ENCODE measurements at regions of chr15 and their contacts with region 1.

Region 1: DNA sequence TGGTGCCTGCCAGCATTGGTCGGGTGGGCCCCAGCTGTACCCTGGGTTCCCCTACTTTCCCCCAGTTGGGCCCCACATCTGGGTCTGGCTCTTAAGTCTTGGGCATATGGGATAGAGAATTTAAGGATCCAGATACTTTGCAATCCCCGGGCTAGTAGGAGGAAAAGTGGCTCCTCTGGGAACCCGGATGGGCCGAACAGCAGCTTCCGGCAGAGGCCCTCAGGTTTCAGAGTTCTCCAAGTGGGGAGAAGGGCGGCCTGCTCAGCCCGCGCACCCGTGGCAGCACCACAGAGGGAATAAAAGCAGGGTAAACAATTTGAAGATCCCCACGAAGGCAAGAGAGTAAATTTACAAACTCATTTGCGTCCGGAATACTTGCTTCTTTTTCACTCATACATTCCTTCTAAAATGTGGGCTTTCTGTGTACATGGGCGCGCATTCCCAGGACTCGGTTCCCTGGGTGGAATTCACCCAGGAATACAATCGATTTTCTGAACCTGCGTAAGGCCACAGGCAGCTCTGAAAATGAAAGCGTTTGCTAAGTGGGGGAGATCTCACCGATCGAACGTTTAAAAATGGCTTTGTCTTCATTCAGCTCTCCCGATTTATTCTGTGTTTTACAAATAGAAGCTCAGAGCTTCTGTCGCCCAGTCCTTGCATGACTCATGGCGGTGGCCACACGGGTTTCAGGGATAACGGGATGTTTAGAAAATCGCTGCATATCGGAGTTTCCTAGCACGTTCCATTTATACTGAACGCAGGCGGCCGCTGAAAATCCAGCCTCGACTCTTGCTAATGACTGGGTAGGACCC is 74.0 kb upstream of the POLG start:
- DNase-seq: peak; percentile 30
- ATAC-seq: no peak
- H3K4me3 Mint-ChIP-seq: peak overlapping the region; percentile 56
- H3K27ac Mint-ChIP-seq: no peak overlapping the region
- H3K4me1 Mint-ChIP-seq: peaks cover 38% of the 10 kb centered on the region
- H3K27me3 Mint-ChIP-seq: peaks cover 84% of the 10 kb centered on the region

Region 2: GRCh38 chr15:89293012-89293411 is 115.6 kb before region 1 on chr15:
- CTCF ChIA-PET with region 1: no interaction called
- POLR2A ChIA-PET with region 1: no interaction called
- intact Hi-C with region 1: no loop called
- DNase-seq: no peak
- ATAC-seq: no peak
- H3K4me3 Mint-ChIP-seq: no peak overlapping the region
- H3K27ac Mint-ChIP-seq: no peak overlapping the region
- H3K4me1 Mint-ChIP-seq: no peaks in the 10 kb centered on the region
- H3K27me3 Mint-ChIP-seq: no peaks in the 10 kb centered on the region

Region 3: DNA sequence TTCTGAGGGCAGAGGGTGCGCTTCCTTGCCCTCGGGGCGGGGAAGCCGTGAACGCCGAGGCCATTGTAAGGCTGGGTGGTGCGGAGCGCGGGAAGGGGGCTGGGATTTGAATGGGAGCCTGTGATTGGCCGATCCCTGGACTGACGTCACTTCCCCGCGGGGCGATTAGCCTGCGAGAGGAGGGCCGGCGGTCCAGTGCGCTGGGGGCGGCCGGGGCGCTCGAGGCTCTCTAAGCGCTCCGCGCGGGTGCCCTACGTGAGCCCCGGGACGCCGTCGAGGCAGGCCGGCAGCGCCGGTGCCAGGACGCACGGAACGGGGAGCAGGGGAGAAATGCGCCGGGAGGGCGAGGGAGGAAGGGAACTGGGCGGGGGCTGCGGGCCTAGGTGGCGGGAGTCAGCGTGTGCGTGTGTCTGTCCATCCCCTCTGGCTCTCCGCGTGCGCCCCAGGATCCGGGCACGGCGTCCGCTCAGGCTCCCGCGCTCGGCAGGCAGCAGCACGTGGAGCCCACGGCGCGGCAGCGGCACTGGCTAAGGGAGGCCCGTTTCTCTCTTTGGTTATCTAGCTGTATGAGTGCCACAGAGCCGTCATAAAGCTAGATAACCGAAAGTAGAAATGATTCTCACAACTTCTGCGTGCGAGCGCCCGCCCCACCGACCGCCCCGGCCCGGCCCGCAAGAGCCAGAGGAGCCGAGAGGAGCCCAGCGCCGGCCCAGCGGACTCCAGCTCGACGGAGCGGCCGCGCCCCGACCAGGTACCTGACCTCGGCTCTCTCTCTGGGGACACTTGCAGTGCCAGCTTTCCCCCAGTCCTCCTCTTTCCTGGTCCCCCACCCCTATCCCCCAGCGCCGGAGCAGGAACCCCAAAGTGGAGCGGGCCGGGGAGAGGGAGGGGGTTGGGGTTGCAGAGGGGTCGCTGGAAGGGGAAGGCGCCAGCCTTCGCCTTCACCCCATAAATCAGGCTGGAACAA is 40.8 kb before region 1 on chr15:
- CTCF ChIA-PET with region 1: interaction called, 108 read pairs
- POLR2A ChIA-PET with region 1: no interaction called
- intact Hi-C with region 1: loop called in 1 of 2 experiments (anchors 2 kb)
- DNase-seq: peak; percentile 47
- ATAC-seq: peak; percentile 25
- H3K4me3 Mint-ChIP-seq: peak overlapping the region; percentile 27
- H3K27ac Mint-ChIP-seq: no peak overlapping the region
- H3K4me1 Mint-ChIP-seq: peaks cover 4% of the 10 kb centered on the region
- H3K27me3 Mint-ChIP-seq: peaks cover 75% of the 10 kb centered on the region

Region 4: GRCh38 chr15:89436570-89437316 is 28.2 kb after region 1 on chr15:
- CTCF ChIA-PET with region 1: no interaction called
- POLR2A ChIA-PET with region 1: no interaction called
- intact Hi-C with region 1: no loop called
- DNase-seq: no peak
- ATAC-seq: no peak
- H3K4me3 Mint-ChIP-seq: no peak overlapping the region
- H3K27ac Mint-ChIP-seq: no peak overlapping the region
- H3K4me1 Mint-ChIP-seq: no peaks in the 10 kb centered on the region
- H3K27me3 Mint-ChIP-seq: peaks cover 19% of the 10 kb centered on the region

Measured in activated CD4-positive, alpha-beta T cell treated with anti-CD3 and anti-CD28 coated beads for 36 hours (primary cell).